MCF 10A (cell line): ENCODE measurements at regions of chr16 and their contacts with region 1.

Region 1: GRCh38 chr16:79601931-79602627 is 1.5 kb upstream of the MAF start:
- DNase-seq: peak; percentile 86
- H3K4me3 Mint-ChIP-seq: peak overlapping the region; percentile 84
- H3K27ac Mint-ChIP-seq: no peak overlapping the region
- H3K4me1 Mint-ChIP-seq: peaks cover 14% of the 10 kb centered on the region
- H3K27me3 Mint-ChIP-seq: no peaks in the 10 kb centered on the region
- CTCF ChIP-seq: peak; percentile 77

Region 2: GRCh38 chr16:77660311-77660710 is 1941.8 kb before region 1 on chr16:
- CTCF ChIA-PET with region 1: no interaction called
- POLR2A ChIA-PET with region 1: no interaction called
- intact Hi-C with region 1: no loop called
- DNase-seq: peak; percentile 53
- H3K4me3 Mint-ChIP-seq: no peak overlapping the region
- H3K27ac Mint-ChIP-seq: no peak overlapping the region
- H3K4me1 Mint-ChIP-seq: peaks cover 4% of the 10 kb centered on the region
- H3K27me3 Mint-ChIP-seq: peaks cover 55% of the 10 kb centered on the region
- CTCF ChIP-seq: peak; percentile 55

Region 3: GRCh38 chr16:78503602-78504001 is 1098.5 kb before region 1 on chr16:
- CTCF ChIA-PET with region 1: interaction called, 10 read pairs
- POLR2A ChIA-PET with region 1: no interaction called
- intact Hi-C with region 1: loop called (anchors 2 kb)
- DNase-seq: peak; percentile 56
- H3K4me3 Mint-ChIP-seq: no peak overlapping the region
- H3K27ac Mint-ChIP-seq: no peak overlapping the region
- H3K4me1 Mint-ChIP-seq: peaks cover 7% of the 10 kb centered on the region
- H3K27me3 Mint-ChIP-seq: no peaks in the 10 kb centered on the region
- CTCF ChIP-seq: peak; percentile 89

Region 4: GRCh38 chr16:78925083-78925767 is 676.9 kb before region 1 on chr16:
- CTCF ChIA-PET with region 1: interaction called, 3 read pairs
- POLR2A ChIA-PET with region 1: no interaction called
- intact Hi-C with region 1: loop called (anchors 2 kb)
- DNase-seq: peak; percentile 33
- H3K4me3 Mint-ChIP-seq: no peak overlapping the region
- H3K27ac Mint-ChIP-seq: no peak overlapping the region
- H3K4me1 Mint-ChIP-seq: no peaks in the 10 kb centered on the region
- H3K27me3 Mint-ChIP-seq: no peaks in the 10 kb centered on the region
- CTCF ChIP-seq: peak; percentile 53

Region 5: DNA sequence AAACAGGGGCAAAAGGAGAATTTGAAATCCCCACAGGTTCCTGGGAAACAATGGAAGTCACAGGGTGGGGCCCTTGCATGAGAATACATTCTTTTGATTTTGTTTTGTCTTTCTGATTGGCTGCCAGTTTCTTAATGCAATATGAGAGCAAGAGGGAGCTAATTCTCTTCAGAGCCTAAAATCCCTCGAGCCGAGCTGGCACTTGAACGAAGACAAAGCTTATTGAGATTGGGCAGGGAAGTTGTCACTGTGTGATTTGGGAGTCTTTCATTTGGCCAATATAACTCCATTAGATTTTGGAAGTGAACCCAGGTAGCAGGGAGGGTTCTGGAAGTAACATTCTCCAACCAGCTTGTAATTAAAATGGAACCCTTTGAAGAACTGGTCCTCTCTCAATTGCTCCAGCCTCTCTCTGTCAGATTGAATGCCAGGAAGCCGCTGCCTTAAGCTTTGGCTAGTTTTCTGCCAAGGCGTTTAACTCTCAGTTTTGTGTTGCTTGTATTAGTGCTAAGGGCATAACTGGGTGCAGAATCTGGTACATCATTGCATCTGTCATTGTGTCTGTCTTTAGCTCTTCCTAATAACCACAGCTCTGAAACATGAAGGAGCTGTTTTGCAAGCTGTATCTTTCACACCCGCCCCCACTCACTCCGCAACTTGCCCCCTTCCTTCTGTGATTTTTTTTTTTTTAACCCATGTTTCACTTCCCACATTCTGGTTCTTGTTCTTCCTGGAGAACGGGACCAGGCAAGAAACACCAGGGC is 273.5 kb before region 1 on chr16:
- CTCF ChIA-PET with region 1: interaction called, 3 read pairs
- POLR2A ChIA-PET with region 1: interaction called, 3 read pairs
- intact Hi-C with region 1: loop called (anchors 5 kb)
- DNase-seq: peak; percentile 34
- H3K4me3 Mint-ChIP-seq: no peak overlapping the region
- H3K27ac Mint-ChIP-seq: no peak overlapping the region
- H3K4me1 Mint-ChIP-seq: peaks cover 8% of the 10 kb centered on the region
- H3K27me3 Mint-ChIP-seq: peaks cover 47% of the 10 kb centered on the region
- CTCF ChIP-seq: no peak

Region 6: GRCh38 chr16:79758615-79759341 is 156.7 kb after region 1 on chr16:
- CTCF ChIA-PET with region 1: interaction called, 10 read pairs
- POLR2A ChIA-PET with region 1: interaction called, 7 read pairs
- intact Hi-C with region 1: loop called (anchors 5 kb)
- DNase-seq: peak; percentile 51
- H3K4me3 Mint-ChIP-seq: peak overlapping the region; percentile 35
- H3K27ac Mint-ChIP-seq: peak overlapping the region; percentile 30
- H3K4me1 Mint-ChIP-seq: peaks cover 34% of the 10 kb centered on the region
- H3K27me3 Mint-ChIP-seq: no peaks in the 10 kb centered on the region
- CTCF ChIP-seq: no peak

Region 7: DNA sequence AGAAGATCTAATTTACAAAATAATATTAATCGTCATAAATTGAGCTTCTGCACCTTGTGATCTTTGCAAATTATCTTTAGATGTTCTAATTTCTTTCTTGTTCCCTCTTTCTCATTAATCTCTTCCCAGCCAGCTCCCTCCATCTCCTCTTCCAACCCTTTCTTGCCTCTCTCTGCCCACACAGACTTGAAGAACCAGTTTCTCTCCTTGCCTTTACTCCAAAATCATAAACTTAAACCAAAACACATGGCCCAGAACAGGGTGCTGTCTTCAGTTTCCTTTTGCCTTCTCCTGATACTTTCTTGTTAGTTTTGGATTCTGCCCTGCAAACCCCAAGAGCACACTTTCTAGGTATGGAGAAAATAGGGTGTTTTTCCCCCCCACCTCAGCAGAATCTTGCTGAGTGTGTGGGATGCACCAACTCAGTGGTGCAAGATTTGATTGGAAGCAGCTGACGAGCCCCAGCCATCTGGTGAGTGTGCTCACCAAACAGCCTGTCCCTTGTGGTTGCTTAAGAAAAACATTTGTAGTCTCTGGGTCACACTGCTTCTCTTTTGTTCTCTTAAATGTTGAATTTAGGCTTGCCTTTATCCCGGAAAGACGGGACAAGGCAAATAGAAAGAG is 174.3 kb after region 1 on chr16:
- CTCF ChIA-PET with region 1: no interaction called
- POLR2A ChIA-PET with region 1: no interaction called
- intact Hi-C with region 1: no loop called
- DNase-seq: no peak
- H3K4me3 Mint-ChIP-seq: no peak overlapping the region
- H3K27ac Mint-ChIP-seq: no peak overlapping the region
- H3K4me1 Mint-ChIP-seq: no peaks in the 10 kb centered on the region
- H3K27me3 Mint-ChIP-seq: no peaks in the 10 kb centered on the region
- CTCF ChIP-seq: no peak

Region 8: GRCh38 chr16:79980650-79981521 is 378.8 kb after region 1 on chr16:
- CTCF ChIA-PET with region 1: no interaction called
- POLR2A ChIA-PET with region 1: no interaction called
- intact Hi-C with region 1: no loop called
- DNase-seq: no peak
- H3K4me3 Mint-ChIP-seq: no peak overlapping the region
- H3K27ac Mint-ChIP-seq: no peak overlapping the region
- H3K4me1 Mint-ChIP-seq: no peaks in the 10 kb centered on the region
- H3K27me3 Mint-ChIP-seq: peaks cover 14% of the 10 kb centered on the region
- CTCF ChIP-seq: no peak

Region 9: DNA sequence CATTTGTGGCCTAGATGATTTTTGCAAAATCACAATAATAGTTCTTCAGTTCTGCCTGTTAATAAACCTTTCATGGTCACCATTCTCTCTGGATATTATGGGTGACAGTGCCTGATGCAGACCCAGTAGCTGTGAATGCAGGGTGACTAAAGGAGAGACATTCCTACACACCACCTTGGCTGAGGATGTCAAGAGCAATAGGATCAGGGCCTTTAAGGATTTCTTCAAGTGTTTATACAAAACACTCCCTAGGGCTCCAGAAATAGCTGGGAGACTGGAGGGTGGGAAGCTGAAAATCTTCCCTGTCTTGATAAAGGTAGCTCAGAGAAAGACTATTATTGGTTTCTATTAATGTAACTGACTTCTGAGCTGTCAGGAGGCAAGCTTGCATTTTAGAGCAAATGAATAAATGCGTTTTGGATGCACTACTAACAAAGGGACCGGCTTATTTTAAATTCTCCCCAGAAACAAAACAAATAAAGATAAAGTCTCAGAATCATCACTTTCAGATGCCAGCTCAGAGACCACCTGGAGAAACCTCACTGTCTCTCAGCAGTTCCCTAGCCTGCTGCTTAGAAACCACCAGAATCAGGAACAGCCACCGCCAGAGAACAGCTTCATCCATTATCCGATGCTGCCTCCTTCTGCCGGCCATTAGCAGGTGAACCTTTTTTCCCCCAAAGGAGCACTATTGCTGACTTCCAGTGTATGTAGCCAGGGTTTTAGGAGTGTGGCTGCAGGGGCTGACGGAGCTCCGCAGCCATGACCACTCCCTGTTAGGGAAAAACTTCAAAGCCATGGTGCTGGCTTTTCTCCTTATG is 767.3 kb after region 1 on chr16:
- CTCF ChIA-PET with region 1: interaction called, 3 read pairs
- POLR2A ChIA-PET with region 1: interaction called, 6 read pairs
- intact Hi-C with region 1: loop called (anchors 1 kb)
- DNase-seq: peak; percentile 27
- H3K4me3 Mint-ChIP-seq: no peak overlapping the region
- H3K27ac Mint-ChIP-seq: no peak overlapping the region
- H3K4me1 Mint-ChIP-seq: no peaks in the 10 kb centered on the region
- H3K27me3 Mint-ChIP-seq: no peaks in the 10 kb centered on the region
- CTCF ChIP-seq: peak; percentile 42